GM12878 (cell line): ENCODE measurements at regions of chr12 and their contacts with region 1.

Region 1: GRCh38 chr12:662566-663292 is 516 bp downstream of the NINJ2 start:
- DNase-seq: no peak
- ATAC-seq: no peak
- H3K4me3 ChIP-seq: no peak overlapping the region
- H3K27ac ChIP-seq: peak overlapping the region; percentile 17; the same call in 1 of the 2 replicates
- H3K4me1 ChIP-seq: peaks cover 60% of the 10 kb centered on the region
- H3K27me3 ChIP-seq: no peaks in the 10 kb centered on the region
- CTCF ChIP-seq: no peak
- EP300 ChIP-seq: no peak
- POLR2A ChIP-seq: no peak
- RAD21 ChIP-seq: no peak

Region 2: DNA sequence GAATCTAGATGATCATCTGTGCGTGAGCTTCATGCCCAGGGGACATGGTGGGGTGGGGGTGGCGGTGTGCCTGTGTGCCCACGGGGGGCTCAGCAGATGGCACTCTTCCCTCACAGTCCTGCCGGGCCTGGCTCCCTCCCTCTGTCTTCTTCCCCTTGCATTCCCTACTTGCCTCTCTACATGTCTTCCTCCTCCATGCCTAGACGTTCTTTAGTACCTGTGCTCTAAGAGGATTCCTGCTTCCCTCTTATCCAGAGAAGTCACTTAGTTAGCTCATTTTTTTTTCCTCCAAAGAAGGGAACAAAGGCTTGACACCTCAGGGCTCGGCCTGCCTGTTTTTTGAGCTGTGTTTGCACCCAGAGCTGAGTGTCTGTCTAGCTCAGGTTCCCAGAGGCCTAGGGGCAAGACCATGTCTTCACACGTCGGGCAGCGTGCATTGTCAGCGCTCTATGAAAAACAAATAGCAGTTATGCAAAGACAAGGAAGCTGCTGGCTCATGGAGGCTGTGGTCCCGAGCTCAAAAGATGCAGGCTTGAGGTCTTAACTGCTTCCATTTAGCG is 48.2 kb before region 1 on chr12:
- CTCF ChIA-PET with region 1: interaction called, 20 read pairs
- POLR2A ChIA-PET with region 1: no interaction called
- RAD21 ChIA-PET with region 1: interaction called, 29 read pairs
- SMC1A ChIA-PET with region 1: interaction called, 20 read pairs
- in situ Hi-C with region 1: no loop called
- intact Hi-C with region 1: no loop called
- DNase-seq: no peak
- ATAC-seq: peak; percentile 78
- H3K4me3 ChIP-seq: no peak overlapping the region
- H3K27ac ChIP-seq: no peak overlapping the region
- H3K4me1 ChIP-seq: peaks cover 10% of the 10 kb centered on the region
- H3K27me3 ChIP-seq: no peaks in the 10 kb centered on the region
- CTCF ChIP-seq: peak; percentile 61 to 86 (median 63)
- EP300 ChIP-seq: no peak
- POLR2A ChIP-seq: no peak
- RAD21 ChIP-seq: peak; percentile 75

Region 3: DNA sequence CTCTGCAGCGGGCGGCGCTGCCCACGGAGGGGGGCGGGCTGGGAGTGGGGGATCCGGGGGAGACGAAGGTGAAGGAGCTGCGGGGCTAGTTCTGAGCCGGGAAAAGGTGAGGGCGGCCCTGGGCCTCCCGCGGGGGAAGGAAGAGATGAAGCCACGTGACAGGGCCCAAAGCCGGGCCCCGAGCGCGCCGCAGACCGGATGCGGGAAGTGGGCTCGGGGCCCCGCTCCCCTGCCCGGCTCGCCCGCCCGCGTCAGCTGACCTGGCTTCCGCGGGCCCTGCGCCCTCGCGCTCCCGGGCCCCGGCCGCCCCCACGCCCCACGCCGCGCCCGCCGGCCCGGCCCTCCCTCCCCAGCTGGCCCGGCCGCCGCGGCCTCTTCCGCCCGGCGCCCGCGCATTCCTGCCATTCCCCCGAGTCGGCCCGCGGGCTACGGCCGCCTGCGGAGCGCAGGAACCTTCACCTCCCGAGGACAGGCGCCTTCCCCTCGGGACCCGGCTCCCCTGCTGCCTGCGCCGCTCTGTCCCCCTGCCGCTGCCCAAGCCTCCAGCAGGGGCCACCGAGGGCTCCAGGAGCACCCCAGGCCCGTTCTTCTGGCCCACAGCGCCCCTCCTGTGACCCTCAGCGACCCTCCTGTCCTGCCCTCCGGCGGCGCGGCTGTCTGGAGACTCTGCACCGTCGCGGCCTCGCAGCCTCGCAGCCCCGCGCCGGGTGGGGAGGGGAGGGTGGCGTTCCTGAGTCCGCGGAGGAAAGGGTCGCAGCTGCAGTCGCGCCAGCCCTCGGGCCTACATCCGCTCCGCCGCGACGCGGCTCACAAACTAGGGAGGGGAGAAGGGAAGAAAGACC is 19.9 kb before region 1 on chr12:
- CTCF ChIA-PET with region 1: interaction called, 7 read pairs
- POLR2A ChIA-PET with region 1: interaction called, 47 read pairs
- RAD21 ChIA-PET with region 1: interaction called, 49 read pairs
- SMC1A ChIA-PET with region 1: interaction called, 22 read pairs
- in situ Hi-C with region 1: no loop called
- intact Hi-C with region 1: no loop called
- DNase-seq: no peak
- ATAC-seq: peak; percentile 82
- H3K4me3 ChIP-seq: peak overlapping the region; percentile 82
- H3K27ac ChIP-seq: peak overlapping the region; percentile 86
- H3K4me1 ChIP-seq: peaks cover 57% of the 10 kb centered on the region
- H3K27me3 ChIP-seq: no peaks in the 10 kb centered on the region
- CTCF ChIP-seq: peak; percentile 20 to 68 (median 34)
- EP300 ChIP-seq: 0 out of 4 replicates have a peak, but pooled peaks of 1 of the 2 experiments have one; percentile 11
- POLR2A ChIP-seq: peak; percentile 83
- RAD21 ChIP-seq: peak; percentile 21

Region 4: DNA sequence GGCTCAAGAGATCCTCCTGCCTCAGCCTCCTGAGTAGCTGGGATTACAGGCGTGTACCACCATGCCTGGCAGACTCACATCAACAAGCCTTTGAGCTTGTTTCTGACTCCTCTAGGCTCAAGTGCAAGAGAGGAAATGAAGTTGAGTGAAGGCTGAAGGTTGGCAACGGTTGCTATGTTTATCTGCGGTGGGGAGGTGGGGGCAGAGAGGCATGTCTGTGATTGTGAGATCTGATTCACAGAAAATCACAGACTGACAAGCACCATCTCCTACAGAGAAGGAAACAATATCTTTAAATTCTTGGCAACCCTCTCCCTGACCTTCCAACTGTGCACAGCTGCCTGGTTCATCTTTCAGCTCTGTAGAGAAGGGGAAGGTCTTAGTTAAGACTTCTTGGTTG is 22.7 kb after region 1 on chr12:
- CTCF ChIA-PET with region 1: interaction called, 4 read pairs
- POLR2A ChIA-PET with region 1: interaction called, 79 read pairs
- RAD21 ChIA-PET with region 1: interaction called, 88 read pairs
- SMC1A ChIA-PET with region 1: interaction called, 24 read pairs
- in situ Hi-C with region 1: no loop called
- intact Hi-C with region 1: no loop called
- DNase-seq: peak; percentile 88
- ATAC-seq: peak; percentile 84
- H3K4me3 ChIP-seq: peak overlapping the region; percentile 37; the same call in 1 of the 2 replicates
- H3K27ac ChIP-seq: peak overlapping the region; percentile 73
- H3K4me1 ChIP-seq: peaks cover 39% of the 10 kb centered on the region
- H3K27me3 ChIP-seq: no peaks in the 10 kb centered on the region
- CTCF ChIP-seq: no peak
- EP300 ChIP-seq: peak; percentile 44 to 64; a peak in 2 of 4 replicates
- POLR2A ChIP-seq: 0 out of 2 replicates have a peak, but pooled peaks have one; percentile 40
- RAD21 ChIP-seq: no peak

Region 5: DNA sequence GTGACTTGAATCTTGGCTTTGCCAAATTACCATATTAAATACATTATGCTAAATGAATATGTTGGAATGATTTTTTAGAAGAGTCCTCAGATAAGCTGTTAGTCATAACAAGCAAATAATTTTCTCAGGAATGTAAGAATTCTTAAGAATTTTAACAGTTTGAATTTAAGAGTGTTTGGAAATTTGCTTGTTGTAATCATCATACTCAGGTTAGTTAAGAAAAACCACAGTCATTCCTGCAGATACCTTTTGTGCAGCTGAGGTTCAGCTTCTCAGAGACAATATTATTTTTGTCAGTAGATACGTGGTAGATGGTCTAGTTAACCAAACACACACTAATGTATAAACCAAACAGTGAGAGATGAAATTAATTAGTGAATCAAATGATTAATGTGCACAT is 98.5 kb after region 1 on chr12:
- CTCF ChIA-PET with region 1: interaction called, 5 read pairs
- POLR2A ChIA-PET with region 1: interaction called, 10 read pairs
- RAD21 ChIA-PET with region 1: interaction called, 6 read pairs
- SMC1A ChIA-PET with region 1: interaction called, 32 read pairs
- in situ Hi-C with region 1: no loop called
- intact Hi-C with region 1: no loop called
- DNase-seq: no peak
- ATAC-seq: no peak
- H3K4me3 ChIP-seq: peak overlapping the region; percentile 28
- H3K27ac ChIP-seq: no peak overlapping the region
- H3K4me1 ChIP-seq: no peaks in the 10 kb centered on the region; the same call in 1 of the 2 replicates
- H3K27me3 ChIP-seq: no peaks in the 10 kb centered on the region
- CTCF ChIP-seq: no peak
- EP300 ChIP-seq: no peak
- POLR2A ChIP-seq: no peak
- RAD21 ChIP-seq: no peak

Region 6: GRCh38 chr12:810671-811415 is 148.1 kb after region 1 on chr12:
- CTCF ChIA-PET with region 1: interaction called, 5 read pairs
- POLR2A ChIA-PET with region 1: interaction called, 5 read pairs
- RAD21 ChIA-PET with region 1: interaction called, 7 read pairs
- SMC1A ChIA-PET with region 1: interaction called, 20 read pairs
- in situ Hi-C with region 1: no loop called
- intact Hi-C with region 1: no loop called
- DNase-seq: no peak
- ATAC-seq: peak; percentile 78
- H3K4me3 ChIP-seq: peak overlapping the region; percentile 5; the same call in 1 of the 2 replicates
- H3K27ac ChIP-seq: peak overlapping the region; percentile 9; the same call in 1 of the 2 replicates
- H3K4me1 ChIP-seq: peaks cover 49% of the 10 kb centered on the region
- H3K27me3 ChIP-seq: no peaks in the 10 kb centered on the region
- CTCF ChIP-seq: no peak
- EP300 ChIP-seq: peak; percentile 61 to 70; a peak in 2 of 4 replicates
- POLR2A ChIP-seq: no peak
- RAD21 ChIP-seq: no peak